Activated B cell treated with CpG ODN at 0.5 μM for 24 hours (primary cell): ENCODE measurements at regions of chr1 and their contacts with region 1.

Region 1: DNA sequence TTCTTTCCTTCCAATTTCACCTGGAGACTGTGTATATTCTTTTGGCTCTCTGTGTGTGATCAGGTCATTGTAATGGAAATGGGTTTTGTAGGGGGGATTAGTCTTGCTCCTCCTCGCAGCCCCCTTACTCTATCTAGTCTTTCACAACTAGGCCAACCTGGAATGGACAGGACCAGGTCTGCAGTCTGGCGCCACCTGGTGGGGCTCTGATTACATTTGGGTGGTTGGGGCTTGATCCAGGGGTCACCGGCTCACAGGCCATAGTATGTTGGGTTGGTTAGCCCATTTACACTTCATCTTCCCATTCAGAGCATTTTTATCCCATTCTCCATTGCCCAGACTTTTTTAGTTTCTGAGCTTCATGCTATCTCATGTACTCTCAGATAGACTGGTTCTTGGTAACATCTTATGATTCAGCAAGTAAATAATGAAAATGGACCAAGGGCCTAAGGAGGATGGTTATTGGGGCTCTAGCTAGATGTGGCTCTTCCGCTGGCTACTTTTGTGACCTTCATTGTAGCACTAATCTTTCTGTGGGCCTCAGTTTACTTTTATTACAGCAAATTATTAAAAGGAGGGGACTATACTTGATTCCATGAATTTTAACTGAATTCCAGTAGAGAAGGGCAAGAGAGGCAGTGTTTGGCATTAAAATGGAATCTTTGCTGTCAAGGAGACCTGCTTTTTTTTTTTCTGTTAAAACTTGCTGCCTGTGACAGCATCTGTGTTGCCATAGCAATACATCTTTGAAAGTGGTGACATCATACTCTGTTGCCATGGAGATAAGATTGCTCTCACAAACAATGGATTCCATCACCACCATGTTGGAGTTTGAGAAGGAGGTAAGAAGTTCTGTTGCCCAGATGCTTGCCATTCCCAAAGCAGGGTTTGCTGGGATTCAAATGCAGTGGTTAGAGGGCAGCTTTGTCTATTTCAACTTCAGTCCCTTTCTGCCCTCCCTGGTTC is 150.1 kb downstream of the PLXNA2 start:
- DNase-seq: no peak
- ATAC-seq: no peak
- H3K4me3 Mint-ChIP-seq: no peak overlapping the region
- H3K27ac Mint-ChIP-seq: no peak overlapping the region
- H3K4me1 Mint-ChIP-seq: no peaks in the 10 kb centered on the region
- H3K27me3 Mint-ChIP-seq: no peaks in the 10 kb centered on the region
- CTCF ChIP-seq: no peak

Region 2: GRCh38 chr1:208025031-208025430 is 69.0 kb before region 1 on chr1:
- CTCF ChIA-PET with region 1: interaction called, 13 read pairs
- POLR2A ChIA-PET with region 1: no interaction called
- intact Hi-C with region 1: loop called (anchors 1 kb)
- DNase-seq: no peak
- ATAC-seq: no peak
- H3K4me3 Mint-ChIP-seq: no peak overlapping the region
- H3K27ac Mint-ChIP-seq: no peak overlapping the region
- H3K4me1 Mint-ChIP-seq: no peaks in the 10 kb centered on the region
- H3K27me3 Mint-ChIP-seq: peaks cover 6% of the 10 kb centered on the region
- CTCF ChIP-seq: no peak

Region 3: DNA sequence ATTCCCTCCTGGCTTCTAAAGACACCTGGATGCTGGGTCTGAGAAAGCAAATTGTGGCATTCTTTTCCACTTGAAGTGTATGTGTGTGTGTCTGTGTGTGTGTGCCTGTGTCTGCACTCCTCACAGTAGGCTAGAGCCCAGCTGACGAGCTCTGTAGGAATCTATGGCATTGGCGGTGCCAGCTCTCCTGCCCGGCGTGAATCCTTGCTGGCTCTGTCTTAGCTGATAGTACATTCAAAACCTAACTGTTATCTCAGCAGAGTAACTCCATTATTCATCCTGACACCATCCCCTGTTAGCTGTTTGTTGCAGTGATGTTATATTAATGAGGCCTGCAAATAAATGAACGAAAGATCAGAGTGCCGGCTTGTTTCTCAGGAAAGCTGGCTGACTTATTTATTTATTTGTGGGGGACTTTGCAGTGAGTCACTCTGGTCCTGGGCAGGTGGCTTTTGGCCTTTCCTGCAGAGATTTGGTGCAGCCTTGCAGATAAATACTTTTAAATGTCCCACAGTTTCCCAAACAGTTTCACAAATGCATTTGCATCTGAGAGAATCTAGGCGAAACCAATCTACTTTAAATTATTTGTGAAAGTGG is 22.5 kb before region 1 on chr1:
- CTCF ChIA-PET with region 1: no interaction called
- POLR2A ChIA-PET with region 1: no interaction called
- intact Hi-C with region 1: no loop called
- DNase-seq: no peak
- ATAC-seq: no peak
- H3K4me3 Mint-ChIP-seq: no peak overlapping the region
- H3K27ac Mint-ChIP-seq: no peak overlapping the region
- H3K4me1 Mint-ChIP-seq: no peaks in the 10 kb centered on the region
- H3K27me3 Mint-ChIP-seq: peaks cover 2% of the 10 kb centered on the region
- CTCF ChIP-seq: no peak